ENCODE measurements at regions of chr13 and their contacts with region 1.

Region 1: DNA sequence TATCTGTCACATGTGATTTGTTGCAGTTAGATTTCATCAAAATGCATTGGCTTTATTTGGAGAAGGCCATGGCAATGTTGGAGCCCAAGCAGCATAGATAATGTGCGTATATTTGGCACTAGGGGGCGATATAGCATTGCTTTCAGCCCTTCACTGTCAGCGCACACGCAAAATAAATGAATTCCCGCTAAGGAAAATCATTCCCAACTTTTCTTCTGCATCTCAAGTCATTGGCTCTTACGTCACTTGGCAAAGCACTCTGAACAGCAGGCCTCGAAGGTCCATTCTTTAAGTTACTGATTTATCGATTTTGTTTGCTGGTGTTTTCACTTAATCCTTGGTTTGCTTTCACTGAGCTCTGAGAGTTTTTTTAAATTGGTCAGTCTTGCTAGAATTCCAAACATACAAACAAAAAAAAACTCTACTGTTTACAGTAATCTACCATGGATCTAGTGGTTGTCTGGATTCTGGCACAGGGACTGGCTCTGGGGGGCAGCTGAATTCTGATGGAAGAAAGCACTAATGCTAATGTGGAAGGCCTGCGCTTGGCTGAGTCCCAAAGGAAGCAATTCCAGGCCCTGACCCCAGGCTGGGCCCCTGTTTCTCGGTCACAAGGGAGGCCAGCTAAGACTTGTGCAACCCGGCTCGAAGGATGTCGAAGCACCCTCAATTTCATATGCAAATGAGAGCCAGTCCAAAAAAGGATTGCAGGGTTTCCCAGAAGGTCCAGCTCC is 97.7 kb upstream of the IPO5 start:
- DNase-seq: peak; percentile 38 to 66 (median 50)
- ATAC-seq: peak; percentile 87
- H3K4me3 ChIP-seq: no peak overlapping the region
- H3K27ac ChIP-seq: no peak overlapping the region
- H3K4me1 ChIP-seq: no peaks in the 10 kb centered on the region
- H3K27me3 ChIP-seq: no peaks in the 10 kb centered on the region
- CTCF ChIP-seq: peak; percentile 32 to 88 (median 83)
- POLR2A ChIP-seq: no peak

Region 2: GRCh38 chr13:97798836-97799235 is 56.9 kb before region 1 on chr13:
- intact Hi-C with region 1: no loop called
- DNase-seq: no peak
- ATAC-seq: no peak
- H3K4me3 ChIP-seq: no peak overlapping the region
- H3K27ac ChIP-seq: no peak overlapping the region
- H3K4me1 ChIP-seq: no peaks in the 10 kb centered on the region
- H3K27me3 ChIP-seq: no peaks in the 10 kb centered on the region
- CTCF ChIP-seq: no peak
- POLR2A ChIP-seq: no peak

Region 3: DNA sequence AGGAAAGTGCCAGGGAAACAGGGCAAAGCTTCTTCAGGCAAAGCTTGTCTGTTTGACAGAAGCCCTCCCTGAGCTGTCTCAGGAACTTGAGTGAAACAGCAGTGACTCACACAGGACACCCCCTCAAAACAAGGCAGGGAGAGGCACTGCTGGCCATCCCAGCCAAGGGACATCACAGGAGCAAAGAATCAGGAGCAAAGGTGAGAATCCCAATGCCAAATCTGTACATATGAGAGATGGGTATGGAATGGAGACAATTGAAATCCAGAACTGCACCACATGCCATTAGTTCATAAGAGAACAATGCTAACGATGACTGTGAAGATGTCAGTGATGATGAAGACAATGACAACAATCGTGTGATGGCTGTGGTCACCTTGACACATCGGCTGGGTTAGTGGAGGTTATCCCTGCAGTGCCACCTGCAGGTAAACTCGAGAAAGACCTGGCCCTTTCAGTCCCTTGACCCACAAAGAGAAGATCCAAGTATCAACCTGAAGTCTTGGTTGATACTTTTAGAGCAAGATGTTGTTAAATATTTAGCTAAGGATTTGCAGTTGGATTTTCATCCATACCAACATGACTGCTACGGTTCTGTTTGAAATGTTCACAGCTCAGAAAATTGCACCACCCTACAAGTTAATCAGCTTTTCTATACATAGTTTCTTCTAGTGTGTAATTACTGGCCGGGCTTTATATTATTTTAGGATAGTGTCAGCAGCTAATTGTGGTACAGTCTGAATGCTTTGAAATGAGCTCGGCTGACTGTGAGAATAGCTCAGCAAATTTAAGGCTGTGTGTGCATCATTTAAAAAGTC is 55.8 kb after region 1 on chr13:
- intact Hi-C with region 1: no loop called
- DNase-seq: peak; percentile 8 to 45 (median 22)
- ATAC-seq: no peak
- H3K4me3 ChIP-seq: no peak overlapping the region
- H3K27ac ChIP-seq: no peak overlapping the region
- H3K4me1 ChIP-seq: no peaks in the 10 kb centered on the region
- H3K27me3 ChIP-seq: no peaks in the 10 kb centered on the region
- CTCF ChIP-seq: peak; percentile 22 to 46 (median 34)
- POLR2A ChIP-seq: no peak

Region 4: DNA sequence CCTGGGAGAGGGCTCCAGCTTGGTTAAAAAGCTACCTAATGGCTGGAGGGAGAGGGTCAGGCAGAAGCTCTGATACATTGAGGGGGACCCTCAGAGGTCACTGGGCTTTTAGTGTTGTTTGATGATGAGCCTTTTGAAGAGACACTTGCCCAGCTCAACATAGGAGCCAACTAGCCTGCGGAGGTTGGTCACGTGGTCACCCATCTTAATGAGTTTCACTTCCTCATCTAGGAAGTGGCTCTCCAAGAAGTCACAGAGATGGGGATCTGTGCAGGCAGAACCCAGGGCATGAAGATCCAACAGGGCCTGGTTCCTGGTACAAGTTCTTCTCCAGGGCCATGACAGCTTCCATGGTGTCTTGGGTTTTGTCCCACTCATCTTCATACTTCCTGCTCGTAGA is 131.1 kb after region 1 on chr13:
- intact Hi-C with region 1: no loop called
- DNase-seq: peak in 1 of 4 donors; percentile 27
- ATAC-seq: no peak
- H3K4me3 ChIP-seq: no peak overlapping the region
- H3K27ac ChIP-seq: no peak overlapping the region
- H3K4me1 ChIP-seq: no peaks in the 10 kb centered on the region
- H3K27me3 ChIP-seq: no peaks in the 10 kb centered on the region
- CTCF ChIP-seq: no peak
- POLR2A ChIP-seq: no peak

Region 5: GRCh38 chr13:98429977-98430736 is 574.4 kb after region 1 on chr13:
- intact Hi-C with region 1: loop called (anchors 10 kb)
- DNase-seq: no peak
- ATAC-seq: no peak
- H3K4me3 ChIP-seq: no peak overlapping the region
- H3K27ac ChIP-seq: peak overlapping the region in 3 of 4 donors; percentile 44 to 61 (median 47)
- H3K4me1 ChIP-seq: peaks cover 12% of the 10 kb centered on the region
- H3K27me3 ChIP-seq: no peaks in the 10 kb centered on the region
- CTCF ChIP-seq: no peak
- POLR2A ChIP-seq: no peak

Region 6: GRCh38 chr13:98672944-98673545 is 817.3 kb after region 1 on chr13:
- intact Hi-C with region 1: loop called (anchors 10 kb)
- DNase-seq: peak; percentile 73 to 80 (median 79)
- ATAC-seq: peak; percentile 94
- H3K4me3 ChIP-seq: no peak overlapping the region
- H3K27ac ChIP-seq: no peak overlapping the region
- H3K4me1 ChIP-seq: peaks cover 9% of the 10 kb centered on the region
- H3K27me3 ChIP-seq: no peaks in the 10 kb centered on the region
- CTCF ChIP-seq: peak; percentile 75 to 90 (median 86)
- POLR2A ChIP-seq: peak in 1 of 3 donors; percentile 18

Measured in body of pancreas (tissue), 4 donors.